ENCODE measurements at regions of chr11 and their contacts with region 1.

Region 1: DNA sequence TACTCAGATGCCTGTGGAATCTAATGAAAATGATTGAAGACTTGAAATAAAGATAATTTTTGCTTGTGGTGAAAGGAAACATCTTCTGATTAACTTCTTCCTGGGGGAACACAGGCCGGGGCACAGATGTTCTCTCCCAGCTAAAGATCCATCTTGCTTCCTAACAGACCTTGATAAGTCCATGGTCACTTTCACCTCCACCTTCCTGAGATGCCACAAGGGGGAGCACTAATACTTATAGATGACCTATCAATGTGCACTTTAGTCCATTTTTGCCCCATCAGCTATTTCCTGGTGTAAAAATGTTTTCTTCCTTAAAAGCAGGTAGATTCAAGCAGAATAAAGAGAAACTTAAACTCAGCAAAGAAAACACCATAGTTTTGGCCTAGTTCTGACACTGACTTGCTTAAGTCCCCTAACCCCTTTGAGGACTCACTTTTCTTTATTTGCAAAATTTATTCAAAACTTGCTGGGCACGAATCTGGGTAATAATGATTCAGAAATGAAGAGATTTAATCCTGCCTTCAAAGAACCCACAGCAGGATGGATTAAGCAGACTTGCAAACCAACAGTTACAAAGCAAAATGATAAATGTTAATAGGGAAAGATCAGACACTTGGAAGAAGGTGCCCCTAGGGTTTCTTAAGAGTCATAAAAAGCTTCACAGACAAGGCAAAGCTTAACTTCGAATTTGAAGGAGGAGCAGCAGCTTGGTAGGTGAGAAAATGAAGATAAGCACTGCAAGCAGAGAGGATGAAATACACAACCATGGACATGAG is 158.7 kb downstream of the RAB38 start:
- DNase-seq: peak; percentile 33 to 55
- H3K4me3 ChIP-seq: no peak overlapping the region
- H3K27ac ChIP-seq: no peak overlapping the region
- H3K4me1 ChIP-seq: no peaks in the 10 kb centered on the region
- H3K27me3 ChIP-seq: no peaks in the 10 kb centered on the region
- CTCF ChIP-seq: peak in 2 of 3 experiments; percentile 62 to 75; a peak in 3 of 4 replicates
- EP300 ChIP-seq: no peak
- POLR2A ChIP-seq: no peak
- RAD21 ChIP-seq: peak; percentile 87 to 89

Region 2: DNA sequence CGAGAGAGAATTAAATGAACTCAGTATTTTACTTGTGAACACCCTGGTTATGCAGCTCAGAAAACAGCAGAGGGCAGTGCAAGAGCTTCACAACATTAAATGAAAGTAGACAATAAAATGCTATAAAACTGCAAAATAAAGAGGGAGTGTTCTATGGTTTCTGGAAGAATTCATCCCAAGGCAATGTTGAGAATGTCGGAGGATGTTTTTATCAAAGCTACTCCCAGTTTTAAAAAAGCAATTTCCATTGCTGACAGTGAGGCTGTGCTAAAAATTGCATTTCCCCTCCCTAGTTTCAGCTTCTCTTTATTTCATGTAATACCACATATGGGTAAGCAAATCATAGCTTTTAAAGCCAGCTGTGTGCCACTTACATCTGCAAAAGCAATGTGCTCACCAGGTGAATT is 138.2 kb before region 1 on chr11:
- CTCF ChIA-PET with region 1: interaction called, 12 read pairs
- POLR2A ChIA-PET with region 1: no interaction called
- DNase-seq: no peak
- H3K4me3 ChIP-seq: no peak overlapping the region
- H3K27ac ChIP-seq: no peak overlapping the region
- H3K4me1 ChIP-seq: peaks cover 0 to 4% (median 2%) of the 10 kb centered on the region in 4 experiments; a peak in 4 of 7 replicates
- H3K27me3 ChIP-seq: no peaks in the 10 kb centered on the region
- CTCF ChIP-seq: peak in 2 of 3 experiments; percentile 39 to 43; a peak in 2 of 4 replicates
- EP300 ChIP-seq: no peak
- POLR2A ChIP-seq: no peak
- RAD21 ChIP-seq: peak; percentile 57 to 62

Region 3: GRCh38 chr11:87892291-87892690 is 124.3 kb before region 1 on chr11:
- CTCF ChIA-PET with region 1: no interaction called
- POLR2A ChIA-PET with region 1: no interaction called
- DNase-seq: no peak
- H3K4me3 ChIP-seq: no peak overlapping the region
- H3K27ac ChIP-seq: no peak overlapping the region
- H3K4me1 ChIP-seq: 0 out of 7 replicates have a peak, but pooled peaks cover 0 to 2% (median 0%) of the 10 kb centered on the region in 4 experiments
- H3K27me3 ChIP-seq: no peaks in the 10 kb centered on the region
- CTCF ChIP-seq: no peak
- EP300 ChIP-seq: no peak
- POLR2A ChIP-seq: no peak
- RAD21 ChIP-seq: no peak

Region 4: DNA sequence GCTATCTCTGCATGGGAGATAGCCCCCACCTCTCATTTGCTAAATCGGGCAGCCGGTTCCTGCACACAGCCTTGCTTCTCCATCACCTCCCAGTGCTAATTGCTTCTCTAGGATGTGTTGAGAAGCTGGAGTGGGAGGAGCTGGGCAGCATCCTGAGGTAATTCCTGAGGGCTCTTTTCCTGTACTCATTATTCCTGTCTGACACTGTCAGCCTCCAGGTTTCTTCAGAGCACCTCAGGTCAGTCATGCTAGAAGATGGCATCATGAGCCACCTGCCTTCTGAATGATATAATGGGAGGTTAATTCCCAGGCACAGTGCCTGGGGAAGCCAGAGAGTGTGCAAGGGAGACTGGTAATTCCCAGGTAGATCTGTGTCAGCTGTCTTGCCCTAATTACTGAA is 25.7 kb after region 1 on chr11:
- CTCF ChIA-PET with region 1: interaction called, 10 read pairs
- POLR2A ChIA-PET with region 1: no interaction called
- DNase-seq: no peak
- H3K4me3 ChIP-seq: no peak overlapping the region
- H3K27ac ChIP-seq: no peak overlapping the region
- H3K4me1 ChIP-seq: peaks cover 0 to 11% (median 4%) of the 10 kb centered on the region in 4 experiments; a peak in 5 of 7 replicates
- H3K27me3 ChIP-seq: no peaks in the 10 kb centered on the region
- CTCF ChIP-seq: no peak
- EP300 ChIP-seq: no peak
- POLR2A ChIP-seq: no peak
- RAD21 ChIP-seq: no peak

Region 5: DNA sequence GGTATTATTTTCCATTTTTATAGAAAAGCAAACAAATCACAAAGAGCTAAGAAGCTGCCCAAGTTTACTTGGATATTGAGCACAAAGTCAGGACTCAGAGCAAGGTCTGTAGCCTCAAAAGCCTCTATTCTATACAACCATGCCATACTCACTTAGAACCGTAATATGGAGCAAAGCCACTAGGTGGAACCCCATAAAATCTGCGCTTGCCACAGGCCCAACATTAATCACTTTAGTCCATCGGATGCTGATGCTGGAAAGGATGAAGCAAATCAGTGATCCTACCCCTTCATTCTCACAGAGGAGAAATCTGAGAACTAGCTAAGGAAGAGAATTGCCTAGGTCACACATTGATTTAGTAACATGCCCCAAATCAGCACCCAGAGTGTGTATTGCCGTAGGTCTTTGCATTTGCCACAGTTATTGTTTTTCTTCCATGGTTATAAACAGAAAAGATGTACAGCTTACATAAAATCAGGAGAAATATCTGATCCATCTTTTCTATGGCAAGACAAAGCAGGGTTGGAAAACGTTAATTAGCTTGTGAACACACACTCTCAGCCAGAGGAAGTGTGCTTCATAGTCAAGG is 215.4 kb after region 1 on chr11:
- CTCF ChIA-PET with region 1: interaction called, 15 read pairs
- POLR2A ChIA-PET with region 1: no interaction called
- DNase-seq: no peak
- H3K4me3 ChIP-seq: no peak overlapping the region
- H3K27ac ChIP-seq: no peak overlapping the region
- H3K4me1 ChIP-seq: 0 out of 7 replicates have a peak, but pooled peaks cover 0 to 2% (median 0%) of the 10 kb centered on the region in 4 experiments
- H3K27me3 ChIP-seq: no peaks in the 10 kb centered on the region
- CTCF ChIP-seq: peak in 2 of 3 experiments; percentile 58 to 73; a peak in 3 of 4 replicates
- EP300 ChIP-seq: no peak
- POLR2A ChIP-seq: no peak
- RAD21 ChIP-seq: peak; percentile 64 to 71

Region 6: GRCh38 chr11:88543902-88544655 is 527.5 kb after region 1 on chr11:
- CTCF ChIA-PET with region 1: interaction called, 32 read pairs
- POLR2A ChIA-PET with region 1: no interaction called
- DNase-seq: peak; percentile 63 to 86
- H3K4me3 ChIP-seq: no peak overlapping the region
- H3K27ac ChIP-seq: no peak overlapping the region
- H3K4me1 ChIP-seq: peaks cover 0 to 3% (median 0%) of the 10 kb centered on the region in 4 experiments; a peak in 2 of 7 replicates
- H3K27me3 ChIP-seq: no peaks in the 10 kb centered on the region
- CTCF ChIP-seq: peak; percentile 78 to 99 (median 98)
- EP300 ChIP-seq: no peak
- POLR2A ChIP-seq: no peak
- RAD21 ChIP-seq: peak; percentile 100

Measured in H1 (cell line).